Head of caudate nucleus (tissue), 42 donors: ENCODE measurements at regions of chr9 and their contacts with region 1.

Region 1: DNA sequence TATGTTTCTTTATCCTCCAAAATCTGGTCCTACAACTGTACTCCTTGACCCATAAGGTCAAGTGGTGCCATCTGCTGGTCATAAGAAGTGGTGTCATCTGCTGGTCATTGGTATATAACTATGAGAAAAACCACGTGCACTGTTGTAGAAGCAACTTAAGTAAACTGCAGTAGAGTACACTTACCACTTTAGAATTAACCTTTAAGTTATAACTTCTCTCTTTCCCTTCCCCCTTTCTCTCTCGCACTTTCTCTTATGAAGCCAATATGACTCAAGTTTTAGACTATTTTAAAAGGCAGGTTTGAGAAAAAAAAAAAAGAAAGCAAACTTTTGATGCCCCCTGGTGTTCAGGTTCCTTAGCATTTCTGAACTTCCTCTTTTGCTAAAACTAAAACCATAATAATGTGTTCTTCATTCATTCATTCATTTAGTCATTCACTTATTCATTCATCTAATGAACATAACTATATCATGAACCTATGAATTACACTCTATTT is 12.8 kb upstream of the MTAP start:
- DNase-seq: peak in 39 of 42 donors; percentile 30 to 86 (median 68)

Region 2: GRCh38 chr9:21317956-21318923 is 471.3 kb before region 1 on chr9:
- intact Hi-C with region 1: loop called (anchors 10 kb)
- DNase-seq: peak in 38 of 42 donors; percentile 14 to 81 (median 54)

Region 3: DNA sequence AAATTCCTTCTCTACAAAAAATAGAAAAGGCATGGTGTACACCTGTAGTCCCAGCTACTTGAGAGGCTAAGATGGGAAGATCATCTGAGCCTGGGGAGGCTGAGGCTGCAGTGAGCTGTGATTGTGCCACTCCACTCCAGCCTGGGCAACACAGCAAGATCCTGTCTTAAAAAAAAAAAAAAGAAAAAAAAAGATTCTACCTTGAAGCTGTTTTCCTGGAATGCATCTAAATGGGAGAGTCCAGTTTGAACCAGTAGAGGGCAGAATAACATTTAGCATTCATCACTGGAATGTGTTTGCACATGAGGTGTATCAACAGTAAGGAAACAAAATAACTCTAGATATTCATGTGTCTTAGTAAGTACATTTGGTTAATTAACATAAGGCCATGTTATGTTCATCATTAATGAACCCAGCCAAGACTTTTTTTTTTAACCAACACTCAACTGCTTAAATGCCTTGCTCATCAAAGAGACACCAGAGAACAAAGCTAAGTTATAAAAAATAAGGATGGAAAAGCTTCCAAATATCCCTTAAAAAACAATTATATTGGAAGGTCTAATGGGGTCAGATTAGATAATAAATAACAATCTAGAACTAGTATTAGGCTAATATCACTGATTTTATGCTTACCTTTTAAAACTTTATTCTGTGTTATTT is 323.6 kb before region 1 on chr9:
- intact Hi-C with region 1: loop called (anchors 10 kb)
- DNase-seq: peak in 1 of 42 donors; percentile 45

Region 4: DNA sequence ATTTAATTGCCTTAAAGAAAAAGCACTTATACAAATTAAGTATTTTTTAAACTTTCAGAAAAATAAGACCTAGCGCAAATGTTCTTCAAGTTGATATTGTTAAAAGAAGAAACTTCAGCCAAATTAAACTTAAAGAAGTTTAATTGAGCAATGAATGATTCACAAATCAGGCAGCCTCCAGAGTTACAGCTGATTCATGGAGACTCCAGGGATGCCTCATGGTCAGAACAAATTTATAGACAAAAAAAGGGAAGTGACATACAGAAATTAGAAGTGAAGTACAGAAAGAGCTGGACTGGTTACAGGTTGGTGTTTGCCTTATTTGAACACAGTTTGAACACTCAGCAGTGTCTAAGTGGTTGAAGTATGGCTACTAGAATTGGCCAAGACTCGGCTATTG is 144.3 kb after region 1 on chr9:
- intact Hi-C with region 1: no loop called
- DNase-seq: no peak